T-cell (primary cell): ENCODE measurements at regions of chrX and their contacts with region 1.

Region 1: GRCh38 chrX:41293269-41293668 is 40.7 kb upstream of the DDX3X start:
- DNase-seq: peak in 1 of 35 experiments; percentile 8
- ATAC-seq: no peak
- H3K4me3 ChIP-seq: no peak overlapping the region
- H3K4me3 Mint-ChIP-seq: no peak overlapping the region
- H3K27ac ChIP-seq: no peak overlapping the region
- H3K27ac Mint-ChIP-seq: no peak overlapping the region
- H3K4me1 ChIP-seq: no peaks in the 10 kb centered on the region
- H3K4me1 Mint-ChIP-seq: no peaks in the 10 kb centered on the region
- H3K27me3 ChIP-seq: no peaks in the 10 kb centered on the region
- H3K27me3 Mint-ChIP-seq: no peaks in the 10 kb centered on the region

Region 2: GRCh38 chrX:41317477-41318208 is 24.4 kb after region 1 on chrX:
- CTCF ChIA-PET with region 1: interaction called in 1 of 2 experiments, 5 read pairs
- POLR2A ChIA-PET with region 1: interaction called in 1 of 2 experiments, 11 read pairs
- DNase-seq: no peak
- ATAC-seq: no peak
- H3K4me3 ChIP-seq: no peak overlapping the region
- H3K4me3 Mint-ChIP-seq: no peak overlapping the region
- H3K27ac ChIP-seq: no peak overlapping the region
- H3K27ac Mint-ChIP-seq: no peak overlapping the region
- H3K4me1 ChIP-seq: no peaks in the 10 kb centered on the region
- H3K4me1 Mint-ChIP-seq: no peaks in the 10 kb centered on the region
- H3K27me3 ChIP-seq: no peaks in the 10 kb centered on the region
- H3K27me3 Mint-ChIP-seq: no peaks in the 10 kb centered on the region

Region 3: DNA sequence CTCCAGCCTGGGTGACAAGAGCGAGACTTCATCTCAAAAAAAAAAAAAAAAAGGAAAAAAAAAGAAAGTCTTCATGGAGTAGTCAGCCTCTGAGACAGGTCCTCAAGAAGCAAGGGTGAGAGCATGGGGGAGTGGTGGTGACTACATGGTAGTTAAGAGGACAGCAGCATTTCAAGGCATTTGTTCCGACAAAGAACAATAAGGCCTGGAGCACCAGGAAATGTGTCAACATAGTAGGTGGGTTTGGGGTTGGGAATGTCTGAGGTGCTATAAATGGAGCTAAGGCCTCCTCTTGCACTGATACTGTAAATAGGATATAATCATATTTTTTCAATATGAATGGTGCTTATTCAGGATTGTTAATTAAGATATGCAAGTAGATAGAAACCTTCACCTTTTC is 465.1 kb after region 1 on chrX:
- CTCF ChIA-PET with region 1: no interaction called
- POLR2A ChIA-PET with region 1: interaction called in 1 of 2 experiments, 10 read pairs
- DNase-seq: no peak
- ATAC-seq: no peak
- H3K4me3 ChIP-seq: no peak overlapping the region
- H3K4me3 Mint-ChIP-seq: no peak overlapping the region
- H3K27ac ChIP-seq: no peak overlapping the region
- H3K27ac Mint-ChIP-seq: no peak overlapping the region
- H3K4me1 ChIP-seq: no peaks in the 10 kb centered on the region
- H3K4me1 Mint-ChIP-seq: peaks cover 0 to 27% (median 10%) of the 10 kb centered on the region in 3 donors
- H3K27me3 ChIP-seq: no peaks in the 10 kb centered on the region
- H3K27me3 Mint-ChIP-seq: peaks cover 0 to 3% of the 10 kb centered on the region in 2 donors